Right ventricle myocardium superior (tissue), 1 donor: ENCODE measurements at regions of chr12 and their contacts with region 1.

Region 1: GRCh38 chr12:13362260-13362841 is 165.8 kb downstream of the EMP1 start:
- DNase-seq: peak; percentile 59
- ATAC-seq: peak; percentile 89

Region 2: DNA sequence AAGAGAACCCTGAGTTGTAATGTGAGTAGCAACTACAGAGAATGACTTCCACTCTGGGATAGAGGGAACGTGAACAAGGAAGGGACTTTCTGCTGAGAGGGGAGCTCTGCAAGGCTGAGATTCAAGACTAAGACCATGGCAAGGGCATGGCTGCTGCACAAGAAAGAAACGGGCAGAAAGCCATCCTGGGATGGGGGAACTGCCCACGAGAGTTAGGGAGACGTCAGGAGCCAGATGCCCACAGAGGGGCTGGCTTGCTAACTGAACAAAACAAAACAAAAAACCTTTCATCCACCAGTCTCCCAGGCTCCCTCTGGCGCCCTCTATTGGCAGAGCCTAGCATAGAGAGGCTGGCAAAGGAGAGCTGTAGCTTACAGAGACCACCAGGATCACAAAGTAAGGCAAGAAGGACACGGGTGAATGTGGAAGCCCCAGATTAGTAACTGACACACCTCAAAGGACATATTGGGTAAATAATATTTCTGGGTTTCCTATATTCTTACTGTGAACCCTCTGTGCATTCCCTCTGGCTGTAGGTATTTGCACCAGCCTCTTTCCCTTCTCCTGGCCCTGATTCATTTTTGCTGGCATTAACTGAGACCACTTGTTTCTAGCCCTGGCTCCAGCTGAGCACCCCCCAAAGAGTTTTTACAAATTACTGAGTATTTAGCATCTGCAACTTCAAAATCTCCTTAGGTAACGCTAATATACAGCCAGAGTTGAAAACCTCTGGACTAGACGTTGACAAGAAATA is 172.5 kb after region 1 on chr12:
- intact Hi-C with region 1: loop called (anchors 5 kb)
- DNase-seq: peak; percentile 83
- ATAC-seq: peak; percentile 77

Region 3: DNA sequence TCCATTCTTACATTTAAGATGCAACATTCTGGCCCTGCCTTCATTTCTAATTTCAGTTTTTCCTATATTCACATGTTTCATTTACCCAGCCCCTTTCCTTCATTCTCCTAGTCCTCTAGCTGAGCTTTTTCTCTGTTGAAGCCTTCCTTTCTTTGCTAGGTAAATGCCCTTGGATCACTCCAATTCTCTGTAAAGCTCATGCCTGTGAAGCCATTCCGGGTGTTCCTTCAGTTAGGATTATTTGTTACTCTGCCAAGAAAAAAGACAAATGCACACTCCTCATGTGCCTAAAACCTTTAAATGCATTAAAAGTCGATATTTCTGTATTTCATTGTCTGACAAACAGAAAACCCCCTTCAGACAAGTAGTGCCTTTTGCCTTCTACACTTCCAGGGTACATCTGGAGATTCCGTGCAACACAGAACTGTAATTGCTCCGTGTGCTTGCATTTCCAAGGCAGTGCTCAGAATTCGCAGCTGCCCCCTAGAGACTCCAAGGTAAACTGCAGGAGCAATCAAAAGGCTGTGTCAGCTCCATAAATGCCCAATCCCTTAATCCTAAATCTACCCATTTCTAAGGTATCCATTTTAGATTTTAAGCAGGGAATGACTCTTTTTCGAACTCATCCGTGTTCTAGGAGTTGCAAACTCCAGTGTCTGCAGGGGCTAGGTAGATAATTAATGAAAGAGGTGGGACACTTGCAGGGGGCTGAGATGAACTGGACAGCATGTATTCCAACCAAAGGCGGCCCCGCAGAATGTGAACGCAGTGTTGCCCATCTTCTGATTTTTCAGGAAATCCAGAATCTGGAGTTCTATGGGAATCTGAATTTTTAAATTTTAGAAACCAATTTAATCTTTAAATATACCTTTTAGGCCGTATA is 298.9 kb after region 1 on chr12:
- intact Hi-C with region 1: loop called (anchors 10 kb)
- DNase-seq: peak; percentile 49
- ATAC-seq: peak; percentile 87